GM12878 (cell line): ENCODE measurements at regions of chr12 and their contacts with region 1.

Region 1: GRCh38 chr12:57111031-57111734 is at the start of gene STAT6:
- DNase-seq: no peak
- ATAC-seq: peak; percentile 81
- H3K4me3 ChIP-seq: peak within 1 kb of the TSS; percentile 95
- H3K27ac ChIP-seq: peak within 1 kb of the TSS; percentile 97
- H3K4me1 ChIP-seq: peaks cover 8% of the 10 kb centered on the region
- H3K27me3 ChIP-seq: no peaks in the 10 kb centered on the region
- CTCF ChIP-seq: no peak
- EP300 ChIP-seq: no peak
- POLR2A ChIP-seq: peak; percentile 74
- RAD21 ChIP-seq: no peak
- polyA plus RNA-seq, gene STAT6: 14.2 to 17.3 TPM

Region 2: DNA sequence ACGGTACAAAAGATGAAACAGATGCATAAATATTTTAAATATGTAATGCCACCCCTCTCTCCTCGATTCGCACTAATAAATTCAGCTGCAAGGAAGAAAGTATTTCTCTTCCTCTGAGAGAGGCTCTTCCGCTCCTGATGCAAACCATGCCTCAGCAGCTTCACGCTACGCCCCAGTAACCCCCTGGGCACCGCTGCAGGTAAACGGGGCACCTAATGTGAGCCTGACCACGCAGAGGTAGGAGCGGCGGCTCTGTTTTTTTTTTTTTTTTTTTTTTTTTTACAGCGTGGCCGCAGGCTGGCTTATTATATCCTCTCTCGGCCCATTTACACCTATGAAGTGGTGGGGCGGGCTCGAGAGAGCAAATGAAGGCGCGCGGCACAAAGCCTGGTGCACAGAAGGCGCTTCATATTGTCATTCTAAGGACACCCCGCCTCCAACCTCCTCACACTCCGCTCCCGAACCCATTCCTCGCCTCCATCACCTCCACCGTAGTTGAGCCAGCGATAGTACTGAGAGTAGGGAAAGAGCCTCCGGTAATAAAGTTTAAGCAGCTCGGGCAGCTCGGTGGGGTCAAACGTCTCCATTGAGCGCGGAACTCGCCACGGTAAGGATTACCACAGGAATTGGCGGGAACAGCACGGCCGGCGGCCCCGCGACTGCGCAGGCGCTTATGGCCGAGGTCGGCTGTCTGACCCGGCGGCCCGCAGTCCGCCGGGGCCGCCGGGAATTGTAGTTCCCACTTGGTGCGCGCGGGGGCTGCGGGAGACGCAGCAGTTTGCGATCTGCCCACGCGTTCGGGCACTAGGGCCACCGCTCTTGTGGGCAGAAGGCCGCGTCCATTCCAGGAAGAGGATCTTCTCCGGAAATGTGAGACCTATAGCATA is 359.2 kb before region 1 on chr12 and contains the start of gene PRIM1:
- CTCF ChIA-PET with region 1: interaction called, 32 read pairs
- POLR2A ChIA-PET with region 1: interaction called, 4 read pairs
- RAD21 ChIA-PET with region 1: interaction called, 22 read pairs
- SMC1A ChIA-PET with region 1: interaction called, 9 read pairs
- in situ Hi-C with region 1: loop called (anchors 5 kb)
- intact Hi-C with region 1: loop called (anchors 5 kb)
- DNase-seq: peak; percentile 54
- ATAC-seq: peak; percentile 87
- H3K4me3 ChIP-seq: peak within 1 kb of the TSS; percentile 82
- H3K27ac ChIP-seq: peak within 1 kb of the TSS; percentile 72
- H3K4me1 ChIP-seq: peaks cover 21% of the 10 kb centered on the region
- H3K27me3 ChIP-seq: no peaks in the 10 kb centered on the region
- CTCF ChIP-seq: no peak
- EP300 ChIP-seq: no peak
- POLR2A ChIP-seq: peak; percentile 82
- RAD21 ChIP-seq: no peak
- polyA plus RNA-seq, gene PRIM1: 54.0 to 70.6 TPM

Region 3: GRCh38 chr12:56987551-56988053 is 123.6 kb before region 1 on chr12:
- CTCF ChIA-PET with region 1: interaction called, 10 read pairs
- POLR2A ChIA-PET with region 1: interaction called, 7 read pairs
- RAD21 ChIA-PET with region 1: interaction called, 9 read pairs
- SMC1A ChIA-PET with region 1: interaction called, 8 read pairs
- in situ Hi-C with region 1: no loop called
- intact Hi-C with region 1: no loop called
- DNase-seq: no peak
- ATAC-seq: peak; percentile 90
- H3K4me3 ChIP-seq: no peak overlapping the region
- H3K27ac ChIP-seq: no peak overlapping the region
- H3K4me1 ChIP-seq: peaks cover 18% of the 10 kb centered on the region
- H3K27me3 ChIP-seq: no peaks in the 10 kb centered on the region
- CTCF ChIP-seq: peak; percentile 93 to 97 (median 96)
- EP300 ChIP-seq: no peak
- POLR2A ChIP-seq: no peak
- RAD21 ChIP-seq: peak; percentile 88

Region 4: GRCh38 chr12:57031138-57031725 is 80.0 kb before region 1 on chr12:
- CTCF ChIA-PET with region 1: interaction called, 26 read pairs
- POLR2A ChIA-PET with region 1: interaction called, 5 read pairs
- RAD21 ChIA-PET with region 1: interaction called, 30 read pairs
- SMC1A ChIA-PET with region 1: interaction called, 27 read pairs
- in situ Hi-C with region 1: no loop called
- intact Hi-C with region 1: no loop called
- DNase-seq: no peak
- ATAC-seq: peak; percentile 81
- H3K4me3 ChIP-seq: no peak overlapping the region
- H3K27ac ChIP-seq: peak overlapping the region; percentile 25; the same call in 1 of the 2 replicates
- H3K4me1 ChIP-seq: peaks cover 11% of the 10 kb centered on the region
- H3K27me3 ChIP-seq: no peaks in the 10 kb centered on the region; a peak in 1 of 4 replicates
- CTCF ChIP-seq: peak; percentile 3 to 35 (median 26); a peak in 3 of 6 replicates
- EP300 ChIP-seq: no peak
- POLR2A ChIP-seq: no peak
- RAD21 ChIP-seq: peak; percentile 50

Region 5: DNA sequence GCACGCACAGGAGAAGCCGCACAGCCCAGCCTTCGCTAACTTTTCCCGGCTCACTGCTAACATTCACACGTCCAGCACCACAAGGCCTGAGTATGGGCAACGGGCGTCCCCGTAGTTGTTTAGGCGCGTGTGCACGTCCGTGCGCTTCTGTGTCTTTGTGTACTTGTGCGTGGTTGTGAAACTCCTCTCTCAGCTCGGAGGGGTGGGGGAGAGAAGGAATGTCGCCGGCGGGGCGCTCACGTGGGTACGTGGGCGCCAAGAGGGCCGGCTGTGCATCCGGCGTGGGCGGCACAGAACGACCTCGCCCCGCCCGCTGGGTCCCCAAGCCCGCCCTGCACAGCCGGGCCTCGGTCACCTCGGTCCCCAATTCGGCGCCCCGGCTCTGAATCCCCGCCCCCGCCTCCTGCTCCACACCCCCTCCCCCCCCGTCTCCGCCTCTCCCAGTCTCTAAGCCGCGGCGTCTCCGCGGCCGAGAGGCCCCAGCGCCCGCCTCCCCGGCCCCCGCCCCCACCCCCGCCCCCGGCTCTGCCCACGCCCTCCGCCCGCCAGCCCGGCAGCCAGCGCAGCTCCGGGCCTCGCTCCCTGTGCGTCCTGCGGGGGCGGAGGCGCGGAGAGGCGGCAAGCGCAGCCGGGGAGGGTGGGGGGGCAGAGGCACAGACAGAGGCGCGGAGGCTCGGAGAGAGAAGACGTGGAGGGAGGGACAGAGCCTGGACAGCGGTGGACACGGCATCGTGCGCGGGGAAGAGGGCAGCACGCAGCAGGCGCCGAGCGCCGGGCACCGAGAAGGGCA is 22.5 kb before region 1 on chr12 and contains the start of gene NAB2:
- CTCF ChIA-PET with region 1: interaction called, 144 read pairs
- POLR2A ChIA-PET with region 1: interaction called, 41 read pairs
- RAD21 ChIA-PET with region 1: interaction called, 125 read pairs
- SMC1A ChIA-PET with region 1: interaction called, 120 read pairs
- in situ Hi-C with region 1: no loop called
- intact Hi-C with region 1: loop called (anchors 1 kb)
- DNase-seq: peak; percentile 72
- ATAC-seq: peak; percentile 69
- H3K4me3 ChIP-seq: peak within 1 kb of the TSS; percentile 95
- H3K27ac ChIP-seq: peak within 1 kb of the TSS; percentile 98
- H3K4me1 ChIP-seq: peaks cover 31% of the 10 kb centered on the region
- H3K27me3 ChIP-seq: no peaks in the 10 kb centered on the region
- CTCF ChIP-seq: no peak
- EP300 ChIP-seq: 0 out of 4 replicates have a peak, but pooled peaks of 1 of the 2 experiments have one; percentile 48
- POLR2A ChIP-seq: peak; percentile 82
- RAD21 ChIP-seq: no peak
- polyA plus RNA-seq, gene NAB2: 0.35 to 1.0 TPM

Region 6: DNA sequence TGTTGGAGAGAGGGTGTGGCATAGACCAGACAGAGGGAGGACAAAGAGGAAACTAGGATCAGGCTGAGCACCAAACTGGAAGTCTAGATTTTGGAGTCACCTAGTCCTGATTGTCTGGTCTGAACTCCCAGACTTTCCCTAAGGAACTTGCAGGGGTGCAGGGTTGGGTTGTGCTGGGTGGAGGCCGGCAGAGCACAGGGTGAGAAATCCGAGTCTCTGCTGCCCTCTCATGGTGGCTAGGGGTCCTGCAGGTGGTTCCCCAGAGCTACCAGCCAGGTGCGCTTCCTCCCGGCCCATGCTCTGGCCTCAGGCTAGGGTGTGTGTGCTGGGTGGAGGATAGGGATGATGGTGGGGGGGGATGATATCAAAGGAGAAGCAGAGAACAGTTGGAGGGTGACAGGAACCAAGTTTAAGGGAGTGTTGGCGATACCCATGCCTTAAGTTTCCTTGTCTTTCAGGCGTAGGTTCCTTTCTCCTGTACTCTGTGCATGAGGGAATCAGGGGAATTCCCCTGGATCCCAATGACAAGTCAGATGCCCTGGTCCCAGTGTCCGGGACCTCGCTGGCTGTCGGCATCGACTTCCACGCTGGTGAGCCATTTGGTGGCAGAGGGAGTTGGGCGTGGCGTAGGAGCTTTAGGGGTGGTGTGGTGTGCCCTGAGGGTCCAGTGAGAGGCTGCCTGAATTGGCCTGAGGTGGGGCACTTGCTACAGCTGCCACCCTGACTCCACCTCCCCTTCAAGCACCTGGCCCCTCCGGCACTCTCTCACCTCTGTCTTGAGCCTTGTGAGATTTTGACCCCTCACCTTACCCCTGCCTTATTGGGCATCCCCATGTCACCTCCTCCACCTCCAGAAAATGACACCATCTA is 72.0 kb after region 1 on chr12:
- CTCF ChIA-PET with region 1: interaction called, 19 read pairs
- POLR2A ChIA-PET with region 1: interaction called, 3 read pairs
- RAD21 ChIA-PET with region 1: interaction called, 8 read pairs
- SMC1A ChIA-PET with region 1: interaction called, 14 read pairs
- in situ Hi-C with region 1: no loop called
- intact Hi-C with region 1: no loop called
- DNase-seq: peak; percentile 15
- ATAC-seq: peak; percentile 98
- H3K4me3 ChIP-seq: no peak overlapping the region
- H3K27ac ChIP-seq: no peak overlapping the region
- H3K4me1 ChIP-seq: no peaks in the 10 kb centered on the region
- H3K27me3 ChIP-seq: no peaks in the 10 kb centered on the region; a peak in 2 of 4 replicates
- CTCF ChIP-seq: peak; percentile 96 to 98 (median 97)
- EP300 ChIP-seq: no peak
- POLR2A ChIP-seq: no peak
- RAD21 ChIP-seq: peak; percentile 89